ENCODE measurements at regions of chr9 and their contacts with region 1.

Region 1: GRCh38 chr9:126500684-126501382 is 112.9 kb upstream of the LMX1B start:
- DNase-seq: peak; percentile 68
- H3K4me3 Mint-ChIP-seq: no peak overlapping the region
- H3K27ac Mint-ChIP-seq: no peak overlapping the region
- H3K4me1 Mint-ChIP-seq: peaks cover 7% of the 10 kb centered on the region
- H3K27me3 Mint-ChIP-seq: peaks cover 11% of the 10 kb centered on the region

Region 2: GRCh38 chr9:126558051-126558665 is 57.3 kb after region 1 on chr9:
- CTCF ChIA-PET with region 1: interaction called, 63 read pairs
- POLR2A ChIA-PET with region 1: no interaction called
- DNase-seq: peak; percentile 70
- H3K4me3 Mint-ChIP-seq: no peak overlapping the region
- H3K27ac Mint-ChIP-seq: no peak overlapping the region
- H3K4me1 Mint-ChIP-seq: no peaks in the 10 kb centered on the region
- H3K27me3 Mint-ChIP-seq: peaks cover 24% of the 10 kb centered on the region